IMR-90 (cell line): ENCODE measurements at regions of chr2 and their contacts with region 1.

Region 1: GRCh38 chr2:201551901-201552300 is 91.4 kb downstream of the TMEM237 start:
- DNase-seq: no peak
- ATAC-seq: no peak
- H3K4me3 ChIP-seq: no peak overlapping the region
- H3K27ac ChIP-seq: no peak overlapping the region
- H3K4me1 ChIP-seq: no peaks in the 10 kb centered on the region
- H3K27me3 ChIP-seq: no peaks in the 10 kb centered on the region
- CTCF ChIP-seq: no peak
- POLR2A ChIP-seq: no peak
- RAD21 ChIP-seq: no peak

Region 2: GRCh38 chr2:201118961-201119854 is 432.7 kb before region 1 on chr2:
- CTCF ChIA-PET with region 1: no interaction called
- POLR2A ChIA-PET with region 1: no interaction called
- dilution Hi-C with region 1: no loop called
- in situ Hi-C with region 1: no loop called
- intact Hi-C with region 1: no loop called
- DNase-seq: peak; percentile 52
- ATAC-seq: peak; percentile 25
- H3K4me3 ChIP-seq: peak overlapping the region; percentile 64
- H3K27ac ChIP-seq: peak overlapping the region; percentile 92
- H3K4me1 ChIP-seq: peaks cover 4% of the 10 kb centered on the region
- H3K27me3 ChIP-seq: no peaks in the 10 kb centered on the region
- CTCF ChIP-seq: no peak
- POLR2A ChIP-seq: no peak
- RAD21 ChIP-seq: no peak

Region 3: DNA sequence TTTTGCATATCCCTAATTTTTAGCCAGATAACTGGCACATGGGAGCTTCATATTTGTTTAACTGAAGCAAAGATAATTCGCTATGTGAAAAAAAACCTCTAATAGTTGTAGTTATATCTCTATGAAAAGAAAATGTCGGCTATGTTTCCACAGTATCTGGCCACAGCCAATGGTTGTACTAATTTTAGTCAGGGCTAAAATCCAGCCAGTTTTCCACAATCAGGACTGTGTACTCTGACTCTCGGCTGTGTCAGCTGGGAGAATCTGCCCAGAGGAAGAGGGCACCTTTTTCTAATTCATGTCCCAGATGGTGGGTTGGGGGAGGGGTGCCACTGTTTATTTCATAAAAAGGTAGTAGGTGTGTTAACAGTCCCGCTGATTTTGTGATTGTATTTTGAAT is 61.6 kb before region 1 on chr2:
- CTCF ChIA-PET with region 1: no interaction called
- POLR2A ChIA-PET with region 1: no interaction called
- dilution Hi-C with region 1: no loop called
- in situ Hi-C with region 1: no loop called
- intact Hi-C with region 1: loop called (anchors 5 kb)
- DNase-seq: no peak
- ATAC-seq: no peak
- H3K4me3 ChIP-seq: no peak overlapping the region
- H3K27ac ChIP-seq: no peak overlapping the region
- H3K4me1 ChIP-seq: no peaks in the 10 kb centered on the region
- H3K27me3 ChIP-seq: no peaks in the 10 kb centered on the region
- CTCF ChIP-seq: no peak
- POLR2A ChIP-seq: no peak
- RAD21 ChIP-seq: no peak

Region 4: DNA sequence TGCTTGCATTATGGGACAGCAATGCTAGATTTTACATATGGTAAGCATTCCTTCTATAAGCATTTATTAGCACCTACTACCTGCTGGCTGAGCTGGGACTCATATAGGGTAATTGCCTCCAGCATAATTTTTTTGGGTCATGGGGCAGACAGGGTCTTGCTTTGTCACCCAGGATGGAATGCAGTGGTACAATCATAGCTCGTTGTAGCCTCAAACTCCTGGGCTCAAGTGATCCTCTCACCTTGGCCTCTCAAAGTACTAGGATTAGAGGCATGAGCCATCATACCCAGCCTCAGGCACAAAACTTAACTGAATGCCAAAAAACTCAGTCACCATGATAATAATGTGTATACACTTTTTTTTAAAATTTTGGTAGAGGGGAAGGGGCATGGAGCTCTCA is 56.1 kb after region 1 on chr2:
- CTCF ChIA-PET with region 1: no interaction called
- POLR2A ChIA-PET with region 1: no interaction called
- dilution Hi-C with region 1: no loop called
- in situ Hi-C with region 1: no loop called
- intact Hi-C with region 1: no loop called
- DNase-seq: no peak
- ATAC-seq: no peak
- H3K4me3 ChIP-seq: no peak overlapping the region
- H3K27ac ChIP-seq: no peak overlapping the region
- H3K4me1 ChIP-seq: no peaks in the 10 kb centered on the region
- H3K27me3 ChIP-seq: no peaks in the 10 kb centered on the region
- CTCF ChIP-seq: no peak
- POLR2A ChIP-seq: no peak
- RAD21 ChIP-seq: no peak